ENCODE measurements at regions of chr11 and their contacts with region 1.

Region 1: GRCh38 chr11:809287-810039 is at the start of gene RPLP2:
- DNase-seq: peak; percentile 100
- total RNA-seq, gene RPLP2: 1,286 to 1,386 TPM

Region 2: DNA sequence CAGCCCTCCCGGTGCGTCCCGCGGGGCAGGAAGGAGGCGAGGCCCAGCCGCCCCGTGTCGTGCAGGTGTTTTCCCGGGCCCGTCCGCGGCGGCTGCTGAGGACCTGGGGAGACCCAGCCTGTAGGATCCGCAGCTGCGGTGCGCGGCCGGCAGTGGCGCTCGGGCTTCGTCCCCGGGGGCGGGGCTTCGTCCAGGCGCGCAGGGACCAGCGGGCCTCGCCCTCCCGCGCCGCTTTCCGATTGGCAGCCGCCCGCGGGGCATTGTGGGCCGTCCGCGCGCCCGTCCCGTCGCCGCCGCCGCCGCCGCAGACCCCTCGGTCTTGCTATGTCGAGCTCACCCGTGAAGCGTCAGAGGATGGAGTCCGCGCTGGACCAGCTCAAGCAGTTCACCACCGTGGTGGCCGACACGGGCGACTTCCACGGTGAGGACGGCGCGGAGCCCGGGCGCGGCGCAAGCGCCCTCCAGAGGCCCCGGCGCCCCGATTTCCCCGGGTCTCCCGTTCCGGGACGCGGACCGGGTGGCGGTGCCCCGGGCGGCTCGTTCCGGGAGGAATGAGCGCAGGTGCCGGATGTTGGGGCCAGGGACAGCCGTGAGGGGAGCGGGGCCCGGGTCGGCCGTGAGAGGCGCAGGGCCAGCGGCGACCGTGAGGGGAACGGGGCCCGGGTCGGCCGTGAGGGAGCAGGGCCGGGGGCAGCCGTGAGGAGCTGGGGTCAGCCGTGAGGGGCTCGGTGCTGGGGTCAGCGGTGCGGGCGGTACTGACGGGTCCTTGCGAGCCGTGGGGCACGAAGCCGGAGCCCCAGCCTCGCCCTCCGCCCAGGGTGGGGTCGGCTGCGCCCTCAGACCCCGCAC is 62.1 kb before region 1 on chr11 and contains the start of gene TALDO1:
- intact Hi-C with region 1: loop called in 1 of 2 experiments (anchors 10 kb)
- DNase-seq: peak; percentile 97
- total RNA-seq, gene TALDO1: 76.8 to 109 TPM

Measured in posterior vena cava (tissue), 2 donors.